ENCODE measurements at regions of chr12 and their contacts with region 1.

Region 1: DNA sequence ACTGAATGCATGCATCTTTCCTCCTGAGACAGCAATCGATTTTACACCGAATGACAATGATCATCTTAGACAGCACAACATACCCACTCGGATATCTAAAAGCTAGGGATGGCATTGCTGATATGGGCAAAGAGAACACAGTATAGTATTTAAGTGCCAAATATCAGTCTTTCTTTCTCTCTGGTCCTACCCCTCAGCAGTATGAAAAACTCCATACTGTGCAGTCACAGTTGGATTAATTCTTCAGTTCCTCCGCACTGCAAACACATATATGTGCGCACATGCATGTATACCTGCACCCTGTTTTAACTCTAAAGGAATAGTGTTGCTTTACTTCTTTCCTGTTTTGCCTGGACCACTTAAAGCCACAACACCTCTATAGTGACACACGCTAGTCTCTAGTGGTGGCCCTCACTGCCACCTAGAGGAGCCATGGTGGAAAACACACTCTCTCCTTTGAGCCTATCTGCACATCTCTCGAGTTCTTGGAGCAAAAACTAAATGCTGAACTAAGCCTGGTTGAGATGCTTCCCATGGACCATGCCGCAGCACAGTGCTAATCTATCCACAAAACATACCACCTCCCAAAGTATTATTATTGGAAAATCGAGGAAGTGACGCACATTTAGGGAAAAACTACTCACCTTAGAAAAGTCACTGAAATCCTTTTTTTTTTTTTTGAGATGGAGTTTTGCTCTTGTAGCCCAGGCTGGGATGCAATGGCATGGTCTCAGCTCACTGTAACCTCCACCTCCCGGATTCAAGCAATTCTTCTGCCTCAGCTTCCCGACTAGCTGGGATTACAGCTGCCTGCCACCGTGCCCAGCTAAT is 11.9 kb downstream of the TMEM52B start:
- DNase-seq: peak; percentile 58
- ATAC-seq: peak; percentile 98

Region 2: DNA sequence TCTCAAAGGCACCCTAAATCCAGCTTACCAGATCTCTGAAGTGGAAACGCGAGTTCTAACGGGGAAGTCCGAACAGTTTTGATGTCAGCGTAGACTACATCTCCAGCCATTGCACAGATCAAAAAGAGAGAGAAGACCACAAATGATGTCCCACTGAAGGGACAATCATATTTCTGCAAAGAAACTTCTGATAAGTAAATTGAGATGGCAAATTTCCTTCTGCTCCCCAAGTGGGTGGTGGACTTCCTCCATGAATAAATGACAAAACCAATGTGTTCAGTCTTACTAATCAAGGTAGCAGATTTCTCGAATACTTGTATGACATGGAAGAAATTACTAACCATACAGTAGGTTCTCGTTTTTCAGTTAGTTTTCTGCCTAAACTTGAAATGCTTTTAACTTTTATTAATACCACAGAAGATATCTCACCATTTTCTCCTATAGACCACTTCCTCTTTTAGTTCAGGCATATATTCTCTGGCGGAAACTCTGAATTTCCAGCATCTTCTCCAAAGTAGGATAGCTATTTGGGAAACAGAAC is 457.8 kb before region 1 on chr12 and contains the start of gene CLECL1:
- intact Hi-C with region 1: no loop called
- DNase-seq: no peak
- ATAC-seq: no peak
- total RNA-seq, gene CLECL1: not detected

Region 3: DNA sequence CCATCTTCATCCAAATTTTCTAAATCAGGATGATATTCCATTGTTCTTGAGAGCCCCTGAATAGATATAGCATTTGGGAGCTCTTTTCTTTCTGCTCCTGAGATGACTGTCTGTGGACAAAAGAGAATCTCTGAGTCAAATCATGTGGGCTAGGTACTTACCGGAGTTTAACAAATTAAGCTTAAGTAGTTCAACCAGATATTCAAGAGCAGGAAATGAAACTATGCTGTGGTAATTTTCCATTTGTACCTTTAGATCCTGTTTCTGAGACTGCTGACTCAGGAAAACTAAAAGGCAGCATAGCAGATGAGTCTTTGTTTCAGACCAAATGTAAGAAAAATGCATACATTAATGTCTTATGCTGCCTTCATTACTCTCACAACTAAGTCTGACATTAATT is 60.7 kb before region 1 on chr12 and contains the start of gene CLEC7A:
- intact Hi-C with region 1: no loop called
- DNase-seq: no peak
- ATAC-seq: peak; percentile 48
- total RNA-seq, gene CLEC7A: 2.3 TPM

Region 4: GRCh38 chr12:10142976-10143589 is 47.7 kb before region 1 on chr12:
- intact Hi-C with region 1: no loop called
- DNase-seq: no peak
- ATAC-seq: peak; percentile 82

Region 5: DNA sequence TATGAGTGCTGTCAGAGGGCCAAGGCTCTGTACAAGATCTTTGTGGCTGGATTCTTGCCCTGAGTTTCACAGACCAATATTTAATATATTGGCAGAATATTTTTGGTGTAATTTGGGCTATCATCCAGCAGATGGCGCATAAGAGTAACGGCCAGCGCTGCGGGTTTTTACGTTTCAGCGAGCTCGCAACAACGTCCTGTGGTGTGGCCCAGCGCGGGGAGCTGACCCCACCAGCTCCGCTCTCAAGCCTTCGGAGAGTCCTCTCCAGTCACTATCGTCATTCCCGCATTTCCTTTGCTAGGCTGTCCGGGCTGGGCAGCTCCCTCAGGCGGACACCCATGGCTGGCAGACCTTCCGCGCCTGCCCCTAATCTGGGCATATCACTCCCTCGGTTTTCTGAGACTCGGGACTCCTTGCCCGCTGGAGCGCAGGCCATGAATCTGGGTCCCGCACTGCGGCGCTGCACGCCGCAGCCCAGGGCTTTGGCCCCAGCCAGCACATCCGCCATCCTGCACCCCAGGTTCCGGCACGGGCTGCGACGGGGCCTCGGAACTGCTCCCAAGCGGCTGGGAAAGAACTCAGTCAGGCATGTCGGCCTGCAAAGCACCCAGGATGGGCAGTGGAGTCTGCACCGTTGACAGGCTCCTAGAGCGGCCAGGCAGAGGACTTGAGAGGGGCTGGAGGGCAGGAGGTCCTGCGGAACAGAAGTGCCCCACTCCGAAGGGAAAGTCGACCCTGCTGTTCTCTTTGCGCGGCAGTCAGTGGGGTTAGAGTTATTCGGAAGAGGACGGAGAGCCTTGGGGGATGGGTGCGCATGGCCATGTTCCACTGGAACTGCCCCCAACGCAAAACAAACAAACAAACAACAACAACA is 37.3 kb before region 1 on chr12:
- intact Hi-C with region 1: loop called (anchors 2 kb)
- DNase-seq: peak; percentile 83
- ATAC-seq: peak; percentile 96